ENCODE measurements at regions of chr12 and their contacts with region 1.

Region 1: DNA sequence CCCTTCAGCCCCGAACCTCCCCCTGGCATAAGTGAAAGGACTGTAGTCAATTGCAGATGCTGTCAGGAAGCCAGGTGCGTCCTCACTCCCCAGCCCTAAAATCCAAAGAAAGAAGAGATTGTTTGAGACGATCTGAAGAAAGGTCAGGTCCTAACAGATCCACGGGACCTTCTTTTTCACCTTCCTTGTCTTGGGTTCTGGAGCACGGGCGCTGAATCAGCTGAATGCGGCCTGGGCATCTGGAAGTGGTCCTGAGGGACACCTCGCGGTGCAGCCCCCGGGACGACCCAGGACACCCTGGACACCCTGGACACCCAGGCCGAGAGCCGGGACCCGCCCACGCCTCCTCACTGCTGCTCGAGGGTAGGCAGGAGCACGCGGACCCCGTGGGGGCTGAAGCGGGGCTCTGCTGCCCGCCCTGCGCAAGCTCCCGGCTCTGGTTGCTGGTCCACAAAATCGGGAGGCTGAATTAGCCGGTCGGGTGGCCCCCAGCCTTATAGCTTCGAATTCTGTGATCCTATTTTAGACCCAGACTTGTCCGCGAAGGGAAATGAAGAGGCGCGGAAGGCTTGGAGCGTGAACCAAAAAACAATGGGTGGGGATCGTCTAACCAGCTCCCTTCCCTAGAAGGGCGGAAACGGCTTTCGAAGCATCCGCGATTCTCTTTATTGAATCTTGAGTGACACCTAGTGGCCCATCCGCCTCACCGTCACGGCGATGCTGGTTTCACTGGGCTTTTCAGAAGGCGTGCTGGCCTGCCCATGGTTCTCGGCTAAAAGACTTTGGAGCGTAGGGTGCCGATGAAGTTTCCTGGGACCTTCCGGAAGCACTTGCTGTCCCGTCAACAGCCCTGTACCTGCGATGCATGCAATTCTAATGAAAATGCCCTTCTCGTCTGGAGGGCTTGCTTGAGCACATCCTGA is 46.4 kb upstream of the PLXNC1 start:
- DNase-seq: peak; percentile 64
- ATAC-seq: peak; percentile 87
- H3K4me3 Mint-ChIP-seq: peak overlapping the region; percentile 83
- H3K27ac Mint-ChIP-seq: no peak overlapping the region
- H3K4me1 Mint-ChIP-seq: peaks cover 6% of the 10 kb centered on the region
- H3K27me3 Mint-ChIP-seq: peaks cover 54% of the 10 kb centered on the region
- CTCF ChIP-seq: peak; percentile 34

Region 2: DNA sequence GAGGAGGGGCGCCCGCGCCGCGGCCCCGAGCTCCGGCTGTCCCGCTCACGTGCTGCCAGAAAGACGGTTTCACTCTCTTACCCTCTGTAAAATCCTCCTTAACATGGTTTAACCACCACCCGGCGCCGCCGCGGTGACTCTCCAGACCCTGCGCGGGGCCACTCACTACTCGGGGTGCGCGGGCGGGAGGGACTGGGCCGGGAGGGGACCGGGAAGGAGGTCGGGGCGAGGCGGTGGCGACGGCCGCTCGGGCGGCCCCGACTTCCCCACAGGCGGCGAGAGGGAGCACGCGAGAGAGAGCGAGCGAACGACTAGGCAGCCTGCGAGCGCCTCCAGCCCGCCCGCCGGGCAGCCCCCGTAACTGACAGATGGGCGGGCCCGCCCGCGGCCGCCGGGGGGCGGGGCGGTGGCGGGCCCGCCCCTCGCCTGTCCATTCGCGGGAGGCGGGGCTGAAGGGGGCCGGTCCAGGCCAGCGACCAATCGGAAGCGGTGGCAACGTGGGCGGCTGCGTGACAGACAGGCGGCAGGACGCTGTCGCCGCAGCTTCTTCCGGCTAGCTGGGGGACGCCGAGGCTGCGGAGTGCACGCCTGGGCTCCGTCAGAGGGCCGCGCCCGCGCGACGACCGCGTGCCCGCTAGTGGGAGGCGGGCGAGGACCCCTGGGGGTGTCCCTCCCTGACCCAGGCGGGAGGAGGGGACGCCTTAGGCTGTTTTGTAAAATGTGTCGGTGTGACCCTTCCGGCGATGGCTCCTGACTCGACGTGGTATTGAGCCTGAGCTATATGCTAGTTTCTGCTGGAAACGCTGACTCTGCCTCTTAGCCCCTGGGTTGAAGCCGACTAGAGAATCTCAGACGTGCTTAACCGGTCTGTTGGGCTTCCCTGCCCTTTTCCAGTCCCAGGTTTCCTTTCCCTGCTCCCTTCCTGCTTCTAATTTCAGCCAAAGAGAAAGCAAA is 1172.8 kb before region 1 on chr12 and contains the start of gene EEA1:
- CTCF ChIA-PET with region 1: no interaction called
- POLR2A ChIA-PET with region 1: no interaction called
- intact Hi-C with region 1: loop called (anchors 1 kb)
- DNase-seq: peak; percentile 91
- ATAC-seq: peak; percentile 84
- H3K4me3 Mint-ChIP-seq: peak within 1 kb of the TSS; percentile 89
- H3K27ac Mint-ChIP-seq: peak within 1 kb of the TSS; percentile 96
- H3K4me1 Mint-ChIP-seq: peaks cover 32% of the 10 kb centered on the region
- H3K27me3 Mint-ChIP-seq: no peaks in the 10 kb centered on the region
- CTCF ChIP-seq: no peak
- total RNA-seq, gene EEA1: 21.3 and 22.6 TPM in 2 replicates

Region 3: DNA sequence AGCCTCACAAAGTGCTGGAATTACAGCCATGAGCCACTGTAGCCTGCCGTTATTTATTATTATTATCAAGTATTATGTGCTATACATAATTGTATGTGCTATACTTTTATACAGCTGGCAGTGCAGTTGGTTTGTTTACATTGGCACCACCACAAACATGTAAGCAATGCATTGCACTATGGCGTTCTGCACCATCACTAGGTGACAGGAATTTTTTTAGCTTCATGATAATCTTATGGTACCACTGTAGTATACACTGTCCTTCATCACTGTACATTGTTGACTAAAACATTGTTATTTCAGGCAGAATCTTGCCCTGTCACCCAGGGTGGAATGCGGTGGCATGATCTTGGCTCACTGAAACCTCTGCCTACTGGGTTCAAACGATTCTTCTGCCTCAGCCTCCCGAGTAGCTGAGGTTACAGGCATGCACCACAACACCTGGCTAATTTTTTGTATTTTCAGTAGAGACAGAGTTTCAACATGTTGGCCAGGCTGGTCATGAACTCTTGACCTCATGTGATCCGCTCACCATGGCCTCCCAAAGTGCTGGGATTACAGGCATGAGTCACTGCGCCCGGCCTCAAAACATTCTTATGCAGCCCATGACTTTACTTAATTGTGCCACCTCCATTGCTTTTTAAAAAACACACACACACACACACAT is 617.6 kb before region 1 on chr12:
- CTCF ChIA-PET with region 1: interaction called, 10 read pairs
- POLR2A ChIA-PET with region 1: no interaction called
- intact Hi-C with region 1: no loop called
- DNase-seq: no peak
- ATAC-seq: no peak
- H3K4me3 Mint-ChIP-seq: no peak overlapping the region
- H3K27ac Mint-ChIP-seq: no peak overlapping the region
- H3K4me1 Mint-ChIP-seq: no peaks in the 10 kb centered on the region
- H3K27me3 Mint-ChIP-seq: no peaks in the 10 kb centered on the region
- CTCF ChIP-seq: no peak

Region 4: DNA sequence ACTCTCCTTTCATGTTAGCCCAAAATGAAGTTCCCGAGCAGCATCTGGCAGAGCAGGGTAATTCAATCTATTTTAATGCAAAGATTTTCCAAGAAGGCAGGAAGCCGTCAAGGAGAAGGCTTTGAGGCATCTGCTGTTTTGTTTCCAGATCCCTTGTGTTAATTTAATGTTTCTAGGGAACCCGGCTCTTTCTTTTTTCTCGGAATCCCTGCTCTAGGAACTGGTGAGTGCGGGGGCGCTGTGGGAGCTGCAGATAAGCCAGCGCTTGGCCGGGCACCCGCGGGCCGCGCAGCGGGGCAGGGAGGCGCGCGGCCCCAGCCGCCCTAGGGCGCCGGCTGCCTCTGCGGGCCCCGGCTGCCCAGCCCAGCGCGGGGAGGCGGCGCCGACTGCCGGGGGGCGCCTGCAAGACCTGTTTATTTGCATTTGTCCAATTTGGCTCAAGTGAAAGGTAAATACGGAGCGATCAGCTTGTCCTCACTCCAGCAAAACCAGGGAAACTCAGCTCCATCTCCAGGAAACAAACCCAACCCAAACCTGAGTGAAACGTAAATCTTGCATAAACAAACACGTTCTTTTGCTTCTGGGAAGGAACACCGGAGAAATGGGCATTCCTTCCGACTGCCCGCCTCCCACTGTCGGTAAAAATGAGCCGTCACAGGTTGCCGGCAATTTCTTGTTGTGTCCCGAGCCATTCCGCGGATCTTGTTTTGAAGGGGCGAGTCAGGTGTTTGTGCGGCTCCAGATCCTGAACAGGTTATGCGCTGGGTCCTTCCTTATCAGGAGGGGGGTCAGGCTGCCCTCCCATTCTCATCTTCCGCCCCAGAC is 359.7 kb before region 1 on chr12:
- CTCF ChIA-PET with region 1: interaction called, 17 read pairs
- POLR2A ChIA-PET with region 1: no interaction called
- intact Hi-C with region 1: loop called (anchors 1 kb)
- DNase-seq: peak; percentile 56
- ATAC-seq: peak; percentile 93
- H3K4me3 Mint-ChIP-seq: peak overlapping the region; percentile 87
- H3K27ac Mint-ChIP-seq: peak overlapping the region; percentile 84
- H3K4me1 Mint-ChIP-seq: peaks cover 41% of the 10 kb centered on the region
- H3K27me3 Mint-ChIP-seq: no peaks in the 10 kb centered on the region
- CTCF ChIP-seq: no peak

Region 5: GRCh38 chr12:94112132-94112531 is 10.1 kb after region 1 on chr12:
- CTCF ChIA-PET with region 1: interaction called, 14 read pairs
- POLR2A ChIA-PET with region 1: no interaction called
- intact Hi-C with region 1: no loop called
- DNase-seq: no peak
- ATAC-seq: no peak
- H3K4me3 Mint-ChIP-seq: no peak overlapping the region
- H3K27ac Mint-ChIP-seq: no peak overlapping the region
- H3K4me1 Mint-ChIP-seq: no peaks in the 10 kb centered on the region
- H3K27me3 Mint-ChIP-seq: no peaks in the 10 kb centered on the region
- CTCF ChIP-seq: no peak

Region 6: GRCh38 chr12:94532490-94533422 is 430.8 kb after region 1 on chr12:
- CTCF ChIA-PET with region 1: interaction called, 4 read pairs
- POLR2A ChIA-PET with region 1: no interaction called
- intact Hi-C with region 1: loop called (anchors 1 kb)
- DNase-seq: peak; percentile 63
- ATAC-seq: peak; percentile 88
- H3K4me3 Mint-ChIP-seq: no peak overlapping the region
- H3K27ac Mint-ChIP-seq: no peak overlapping the region
- H3K4me1 Mint-ChIP-seq: peaks cover 5% of the 10 kb centered on the region
- H3K27me3 Mint-ChIP-seq: peaks cover 9% of the 10 kb centered on the region
- CTCF ChIP-seq: no peak

Region 7: GRCh38 chr12:94875525-94875924 is 773.5 kb after region 1 on chr12:
- CTCF ChIA-PET with region 1: no interaction called
- POLR2A ChIA-PET with region 1: no interaction called
- intact Hi-C with region 1: no loop called
- DNase-seq: no peak
- ATAC-seq: peak; percentile 74
- H3K4me3 Mint-ChIP-seq: peak overlapping the region; percentile 74
- H3K27ac Mint-ChIP-seq: peak overlapping the region; percentile 46
- H3K4me1 Mint-ChIP-seq: peaks cover 38% of the 10 kb centered on the region
- H3K27me3 Mint-ChIP-seq: peaks cover 37% of the 10 kb centered on the region
- CTCF ChIP-seq: no peak

Measured in activated B cell treated with CpG ODN at 0.5 μM for 24 hours (primary cell).